Naive thymus-derived CD4-positive, alpha-beta T cell (primary cell): ENCODE measurements at regions of chr3 and their contacts with region 1.

Region 1: DNA sequence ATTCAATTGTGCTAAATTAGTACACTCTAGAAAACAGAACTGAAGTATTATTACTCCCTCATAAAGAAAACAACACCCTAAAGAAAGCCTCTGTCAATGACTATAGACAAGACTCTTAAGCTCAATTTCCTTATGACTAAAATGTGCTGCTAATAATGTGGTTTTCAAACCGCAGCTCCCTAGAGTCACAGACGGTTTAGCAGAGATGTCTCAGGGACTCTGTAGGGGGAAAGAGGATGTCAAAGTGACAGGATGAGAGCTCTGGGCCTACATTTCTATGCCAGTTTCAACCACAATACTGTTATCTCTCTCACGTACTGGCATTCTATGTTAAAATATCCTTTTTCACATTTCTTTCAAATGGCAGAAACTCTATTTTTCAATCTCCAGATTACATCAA is 37.6 kb upstream of the WDR49 start:
- DNase-seq: peak in 7 of 9 donors; percentile 2 to 27 (median 23)
- ATAC-seq: peak; percentile 78
- H3K4me3 ChIP-seq: no peak overlapping the region
- H3K4me3 Mint-ChIP-seq: peak overlapping the region in 3 of 10 donors; percentile 4 to 33 (median 30)
- H3K27ac ChIP-seq: peak overlapping the region; percentile 50
- H3K27ac Mint-ChIP-seq: peak overlapping the region; percentile 49 to 86 (median 77)
- H3K4me1 ChIP-seq: peaks cover 9 to 14% of the 10 kb centered on the region in 2 donors
- H3K4me1 Mint-ChIP-seq: peaks cover 14 to 40% (median 28%) of the 10 kb centered on the region in 7 donors
- H3K27me3 ChIP-seq: no peaks in the 10 kb centered on the region
- H3K27me3 Mint-ChIP-seq: no peaks in the 10 kb centered on the region

Region 2: DNA sequence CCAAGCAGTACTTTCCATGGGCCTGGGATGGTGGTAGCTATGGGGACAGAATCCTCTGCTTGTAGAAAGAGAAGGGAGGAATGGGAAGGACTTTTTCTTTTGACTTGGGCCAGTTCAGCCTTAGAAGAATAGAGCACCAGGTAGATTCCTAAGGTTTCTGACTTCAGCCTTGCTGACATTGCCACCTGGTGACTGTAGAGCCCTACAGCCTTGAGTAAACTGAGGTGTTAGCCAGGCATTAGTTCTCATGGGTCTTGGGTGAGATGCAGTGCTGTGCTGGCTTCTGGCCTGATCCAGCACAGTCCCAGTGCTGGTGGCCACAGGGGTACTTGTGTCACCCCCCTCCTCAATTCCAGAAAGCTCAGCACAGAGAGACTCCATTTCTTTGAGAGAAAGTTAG is 482.3 kb before region 1 on chr3:
- CTCF ChIA-PET with region 1: no interaction called
- POLR2A ChIA-PET with region 1: no interaction called
- intact Hi-C with region 1: no loop called
- DNase-seq: no peak
- ATAC-seq: no peak
- H3K4me3 ChIP-seq: no peak overlapping the region
- H3K4me3 Mint-ChIP-seq: no peak overlapping the region
- H3K27ac ChIP-seq: no peak overlapping the region
- H3K27ac Mint-ChIP-seq: no peak overlapping the region
- H3K4me1 ChIP-seq: no peaks in the 10 kb centered on the region
- H3K4me1 Mint-ChIP-seq: no peaks in the 10 kb centered on the region
- H3K27me3 ChIP-seq: no peaks in the 10 kb centered on the region
- H3K27me3 Mint-ChIP-seq: no peaks in the 10 kb centered on the region

Region 3: GRCh38 chr3:167705840-167706239 is 14.5 kb after region 1 on chr3:
- CTCF ChIA-PET with region 1: no interaction called
- POLR2A ChIA-PET with region 1: no interaction called
- intact Hi-C with region 1: loop called in 1 of 2 experiments (anchors 2 kb)
- DNase-seq: no peak
- ATAC-seq: no peak
- H3K4me3 ChIP-seq: no peak overlapping the region
- H3K4me3 Mint-ChIP-seq: no peak overlapping the region
- H3K27ac ChIP-seq: no peak overlapping the region
- H3K27ac Mint-ChIP-seq: peak overlapping the region in 1 of 9 donors; percentile 8
- H3K4me1 ChIP-seq: no peaks in the 10 kb centered on the region
- H3K4me1 Mint-ChIP-seq: peaks cover 14 to 52% (median 46%) of the 10 kb centered on the region in 7 donors
- H3K27me3 ChIP-seq: no peaks in the 10 kb centered on the region
- H3K27me3 Mint-ChIP-seq: no peaks in the 10 kb centered on the region